ENCODE measurements at regions of chr16 and their contacts with region 1.

Region 1: DNA sequence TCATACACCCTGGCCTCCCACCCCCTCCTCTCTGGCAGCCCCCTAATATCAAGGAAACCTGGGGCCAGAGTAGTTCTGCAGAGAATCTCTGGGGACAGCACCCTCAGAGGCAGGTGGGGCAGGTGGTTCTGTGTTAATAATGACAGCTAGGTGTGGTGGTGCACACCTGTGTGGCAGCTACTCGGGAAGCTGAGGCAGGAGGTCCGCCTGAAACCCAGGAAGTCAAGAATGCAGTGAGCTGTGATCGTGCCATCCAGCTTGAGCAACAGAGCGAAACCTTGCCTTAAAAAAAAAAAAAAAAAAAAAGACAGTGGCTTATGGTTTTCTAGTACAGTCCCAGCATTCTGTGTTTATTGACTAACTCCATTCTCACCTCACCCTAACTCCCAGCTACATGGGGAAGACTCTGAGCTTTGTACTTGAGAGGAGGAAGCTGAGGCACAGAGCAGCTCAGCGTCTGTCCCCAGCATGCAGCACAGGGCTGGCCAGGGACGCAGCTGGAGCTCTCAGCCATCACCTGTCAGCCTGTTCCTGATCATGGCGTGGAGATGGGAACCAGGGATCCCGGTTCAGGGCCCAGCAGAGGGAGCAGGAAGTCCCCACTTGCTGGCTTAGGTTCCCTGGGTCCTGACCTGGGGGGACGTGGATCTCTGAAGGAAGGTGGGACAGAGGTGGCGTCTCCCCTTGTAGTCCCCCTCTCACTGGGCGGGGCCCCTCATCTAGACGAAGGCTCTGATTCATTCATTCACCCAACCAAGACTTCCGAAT is 6.1 kb downstream of the DBNDD1 start:
- DNase-seq: no peak
- H3K4me3 ChIP-seq: no peak overlapping the region
- H3K27ac ChIP-seq: no peak overlapping the region
- H3K4me1 ChIP-seq: no peaks in the 10 kb centered on the region
- H3K27me3 ChIP-seq: no peaks in the 10 kb centered on the region
- CTCF ChIP-seq: no peak

Region 2: DNA sequence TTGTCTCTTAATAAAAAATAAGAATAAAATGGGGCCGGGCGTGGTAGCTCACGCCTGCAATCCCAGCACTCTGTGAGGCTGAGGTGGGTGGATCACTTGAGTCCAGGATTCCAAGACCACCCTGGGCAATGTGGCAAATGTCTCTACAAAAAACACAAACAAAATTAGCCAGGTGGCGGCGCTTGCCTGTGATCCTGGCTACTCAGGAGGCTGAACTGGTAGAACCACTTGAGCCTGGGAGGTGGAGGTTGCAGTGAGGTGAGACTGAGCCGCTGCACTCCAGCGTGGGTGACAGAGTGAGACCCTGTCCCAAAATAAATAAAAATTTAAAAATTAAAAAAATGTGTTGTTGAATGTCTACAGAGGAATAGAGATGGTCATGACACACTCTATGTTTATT is 67.5 kb before region 1 on chr16:
- CTCF ChIA-PET with region 1: no interaction called
- dilution Hi-C with region 1: no loop called
- in situ Hi-C with region 1: no loop called
- intact Hi-C with region 1: no loop called
- DNase-seq: no peak
- H3K4me3 ChIP-seq: no peak overlapping the region
- H3K27ac ChIP-seq: no peak overlapping the region
- H3K4me1 ChIP-seq: peaks cover 13% of the 10 kb centered on the region
- H3K27me3 ChIP-seq: no peaks in the 10 kb centered on the region
- CTCF ChIP-seq: peak in 1 of 2 donors; percentile 1

Region 3: DNA sequence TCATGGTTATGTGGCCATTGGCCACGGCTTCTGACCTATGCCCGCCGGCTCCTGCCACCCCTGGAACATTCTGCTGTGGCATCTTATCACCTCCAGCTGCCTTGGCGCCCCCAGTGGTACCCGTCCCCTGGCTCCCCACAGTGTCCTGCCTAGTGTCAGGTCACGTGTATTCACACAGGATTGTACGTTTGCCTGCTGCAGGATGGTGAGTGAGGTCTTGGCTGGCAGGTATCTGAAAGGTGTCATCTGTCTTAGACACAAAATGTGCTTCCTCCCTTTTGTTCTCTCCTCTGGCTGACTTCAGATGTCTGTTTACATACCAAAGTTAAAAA is 18.8 kb before region 1 on chr16:
- CTCF ChIA-PET with region 1: no interaction called
- dilution Hi-C with region 1: no loop called
- in situ Hi-C with region 1: no loop called
- intact Hi-C with region 1: no loop called
- DNase-seq: no peak
- H3K4me3 ChIP-seq: no peak overlapping the region
- H3K27ac ChIP-seq: peak overlapping the region; percentile 38
- H3K4me1 ChIP-seq: no peaks in the 10 kb centered on the region
- H3K27me3 ChIP-seq: no peaks in the 10 kb centered on the region
- CTCF ChIP-seq: no peak

Region 4: DNA sequence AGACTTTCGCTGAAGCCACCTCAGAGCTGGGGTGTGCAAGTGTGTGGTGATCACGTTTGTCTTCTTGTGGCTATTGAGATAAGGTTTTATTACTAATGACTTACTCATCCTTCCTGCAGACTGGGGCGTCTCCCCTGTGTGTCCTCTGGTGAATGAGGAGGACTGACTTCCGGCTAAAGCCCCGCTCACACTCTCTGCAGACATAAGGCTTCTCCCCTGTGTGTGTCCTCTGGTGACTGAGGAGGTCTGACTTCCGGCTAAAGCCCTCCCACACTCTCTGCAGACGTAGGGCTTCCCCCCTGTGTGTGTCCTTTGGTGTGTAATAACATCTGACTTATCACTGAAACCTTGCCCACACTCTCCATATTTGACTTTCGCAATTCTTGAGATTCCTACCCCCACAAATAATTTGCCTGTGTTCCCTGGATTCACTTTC is 44.6 kb after region 1 on chr16:
- CTCF ChIA-PET with region 1: no interaction called
- dilution Hi-C with region 1: loop called (anchors 5 kb)
- in situ Hi-C with region 1: no loop called
- intact Hi-C with region 1: no loop called
- DNase-seq: peak; percentile 15
- H3K4me3 ChIP-seq: no peak overlapping the region
- H3K27ac ChIP-seq: no peak overlapping the region
- H3K4me1 ChIP-seq: peaks cover 3% of the 10 kb centered on the region
- H3K27me3 ChIP-seq: no peaks in the 10 kb centered on the region
- CTCF ChIP-seq: no peak

Measured in mammary epithelial cell (primary cell).